ENCODE measurements at regions of chr1 and their contacts with region 1.

Region 1: DNA sequence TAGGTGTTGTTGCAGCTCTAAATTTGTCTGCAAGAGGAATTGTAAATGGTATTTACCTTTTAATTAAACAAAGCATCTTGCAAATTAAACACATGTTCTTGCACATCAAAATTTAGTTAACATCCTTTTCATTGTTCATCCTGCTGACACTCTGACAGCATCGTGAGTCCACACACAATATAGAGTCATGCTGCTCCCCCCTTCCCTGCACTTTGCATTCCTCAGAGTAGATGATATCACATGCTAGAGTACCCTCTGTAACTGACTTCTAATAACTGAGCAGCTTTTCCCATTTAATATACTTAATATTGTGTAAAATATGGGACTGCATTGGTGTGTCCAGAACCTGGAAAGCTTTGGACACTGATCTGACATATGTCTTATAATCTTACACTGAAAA is 138.8 kb upstream of the DPYD start:
- DNase-seq: no peak
- ATAC-seq: no peak
- H3K4me3 ChIP-seq: no peak overlapping the region
- H3K27ac ChIP-seq: no peak overlapping the region
- H3K4me1 ChIP-seq: no peaks in the 10 kb centered on the region
- H3K27me3 ChIP-seq: peaks cover 0 to 44% (median 9%) of the 10 kb centered on the region in 9 donors
- CTCF ChIP-seq: no peak
- POLR2A ChIP-seq: no peak

Region 2: GRCh38 chr1:96966536-96967138 is 1093.0 kb before region 1 on chr1:
- intact Hi-C with region 1: loop called in 8 of 10 experiments (anchors 5 kb)
- DNase-seq: peak; percentile 53 to 79 (median 67)
- ATAC-seq: peak; percentile 68 to 83 (median 77)
- H3K4me3 ChIP-seq: peak overlapping the region in 2 of 12 donors; percentile 16 to 29
- H3K27ac ChIP-seq: no peak overlapping the region
- H3K4me1 ChIP-seq: peaks cover 0 to 6% (median 0%) of the 10 kb centered on the region in 12 donors
- H3K27me3 ChIP-seq: peaks cover 0 to 12% (median 0%) of the 10 kb centered on the region in 9 donors
- CTCF ChIP-seq: peak; percentile 82 to 96 (median 92)
- POLR2A ChIP-seq: no peak

Region 3: DNA sequence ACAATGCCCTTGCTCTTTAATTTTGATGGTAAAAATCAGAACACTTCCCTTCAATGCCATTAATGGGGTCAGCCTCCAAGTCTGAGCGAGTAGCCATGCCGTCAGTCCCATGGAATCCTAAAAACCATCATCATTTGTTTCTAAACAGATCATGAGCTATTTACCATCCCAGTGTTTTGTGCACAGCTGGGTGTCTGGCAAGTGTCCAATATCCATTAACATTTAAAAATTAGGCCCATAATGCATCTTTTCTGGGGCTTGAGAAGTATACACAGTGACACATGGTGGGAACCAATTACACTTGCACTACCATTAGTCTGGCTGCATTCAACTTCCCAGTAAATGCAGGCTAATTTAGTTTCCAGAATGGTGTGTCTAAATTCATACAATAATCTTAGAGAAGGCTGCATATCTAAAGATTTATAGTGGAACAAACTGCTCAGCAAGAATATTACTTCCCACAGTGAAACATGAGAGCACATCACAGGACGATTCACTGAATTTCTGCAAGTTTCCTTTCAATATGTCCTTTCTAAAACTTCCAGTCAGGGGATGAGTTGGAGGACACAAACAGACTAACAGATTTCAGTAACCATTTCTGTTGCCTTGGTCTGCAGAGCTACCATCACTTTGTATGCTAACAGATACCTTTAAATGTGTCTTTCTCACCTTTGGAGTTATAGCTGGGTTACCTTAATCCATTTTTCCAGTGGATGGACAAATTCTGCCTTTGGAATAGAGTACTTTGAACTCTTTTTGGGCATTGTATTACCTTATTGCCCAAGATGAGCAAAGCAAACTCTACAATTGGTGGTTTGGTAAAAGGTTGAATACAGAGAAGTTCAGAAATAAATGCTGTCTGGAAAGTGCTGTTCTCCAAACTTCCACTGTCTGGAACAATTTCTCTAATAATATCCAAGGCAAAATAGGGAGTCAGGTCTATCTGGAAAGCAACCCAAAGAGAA is 1080.0 kb before region 1 on chr1:
- intact Hi-C with region 1: loop called in 2 of 10 experiments (anchors 5 kb)
- DNase-seq: no peak
- ATAC-seq: peak in 1 of 4 donors; percentile 78
- H3K4me3 ChIP-seq: no peak overlapping the region
- H3K27ac ChIP-seq: no peak overlapping the region
- H3K4me1 ChIP-seq: no peaks in the 10 kb centered on the region
- H3K27me3 ChIP-seq: no peaks in the 10 kb centered on the region
- CTCF ChIP-seq: no peak
- POLR2A ChIP-seq: no peak

Region 4: DNA sequence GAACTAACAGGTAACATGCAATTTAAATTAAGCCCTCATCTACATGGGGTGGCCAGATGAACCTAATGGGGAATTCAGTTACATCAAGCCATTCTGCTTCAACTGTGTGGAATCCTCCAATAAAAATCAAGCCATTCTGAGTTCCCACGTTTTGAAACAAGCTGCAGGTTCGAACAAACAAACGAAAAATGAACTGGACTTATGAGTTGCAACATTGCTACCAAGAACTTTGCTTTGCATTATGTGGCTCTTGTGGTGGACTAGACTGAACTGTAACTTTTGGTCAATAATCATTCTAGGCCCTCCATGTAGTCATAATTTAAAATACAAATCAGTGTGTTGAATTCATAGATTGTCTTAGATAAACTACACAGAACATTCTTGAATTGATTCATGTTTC is 820.8 kb before region 1 on chr1:
- intact Hi-C with region 1: loop called in 3 of 10 experiments (anchors 5 to 10 kb)
- DNase-seq: no peak
- ATAC-seq: no peak
- H3K4me3 ChIP-seq: no peak overlapping the region
- H3K27ac ChIP-seq: no peak overlapping the region
- H3K4me1 ChIP-seq: no peaks in the 10 kb centered on the region
- H3K27me3 ChIP-seq: no peaks in the 10 kb centered on the region
- CTCF ChIP-seq: no peak
- POLR2A ChIP-seq: no peak